Activated CD4-positive, alpha-beta T cell treated with anti-CD3 and anti-CD28 coated beads for 36 hours (primary cell): ENCODE measurements at regions of chr3 and their contacts with region 1.

Region 1: DNA sequence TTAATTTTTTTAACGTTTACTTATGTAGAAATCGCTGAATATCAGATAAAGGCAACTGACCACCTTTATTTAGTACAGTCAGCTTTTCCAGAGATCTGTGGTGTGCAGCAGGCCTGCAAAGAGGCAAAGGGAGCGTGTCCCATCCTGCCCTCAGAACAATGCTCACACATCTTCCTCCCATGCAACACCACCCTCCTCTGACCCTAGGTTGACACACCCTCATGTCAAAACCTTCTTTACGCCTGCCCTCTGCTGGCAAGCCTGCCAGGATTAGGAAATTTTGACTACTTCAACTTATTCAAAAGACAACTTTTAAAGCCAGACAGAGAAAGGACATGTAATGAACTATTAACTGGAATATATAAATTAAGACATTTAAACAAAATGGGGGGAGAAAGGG is 513.7 kb downstream of the FOXP1 start:
- DNase-seq: peak; percentile 84
- ATAC-seq: peak; percentile 42
- H3K4me3 Mint-ChIP-seq: no peak overlapping the region
- H3K27ac Mint-ChIP-seq: peak overlapping the region; percentile 67
- H3K4me1 Mint-ChIP-seq: peaks cover 85% of the 10 kb centered on the region
- H3K27me3 Mint-ChIP-seq: no peaks in the 10 kb centered on the region

Region 2: DNA sequence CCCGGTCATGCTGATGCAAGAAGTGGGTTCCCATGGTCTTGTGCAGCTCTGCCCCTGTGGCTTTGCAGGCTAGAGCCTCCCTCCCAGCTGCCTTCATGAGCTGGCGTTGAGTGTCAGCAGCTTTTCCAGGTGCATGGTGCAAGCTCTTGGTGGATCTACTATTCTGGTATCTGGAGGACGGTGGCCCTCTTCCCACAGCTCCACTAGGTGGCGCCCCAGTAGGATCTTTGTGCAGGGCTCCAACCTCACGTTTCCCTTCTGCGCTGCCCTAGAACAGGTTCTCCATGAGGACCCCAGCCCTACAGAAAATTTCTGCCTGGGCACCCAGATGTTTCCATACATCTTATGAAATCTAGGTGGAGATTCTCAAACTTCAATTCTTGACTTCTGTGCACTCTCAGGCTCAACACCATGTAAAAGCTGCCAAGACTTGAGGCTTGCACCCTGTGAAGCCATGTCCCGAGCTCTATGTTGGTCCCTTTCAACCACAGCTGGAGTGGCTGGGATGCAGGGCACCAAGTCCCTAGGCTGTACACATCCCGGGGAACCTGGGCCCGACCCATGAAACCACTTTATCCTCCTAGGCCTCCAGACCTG is 519.0 kb before region 1 on chr3:
- CTCF ChIA-PET with region 1: interaction called, 3 read pairs
- POLR2A ChIA-PET with region 1: no interaction called
- intact Hi-C with region 1: loop called (anchors 2 to 5 kb)
- DNase-seq: peak; percentile 88
- ATAC-seq: peak; percentile 91
- H3K4me3 Mint-ChIP-seq: no peak overlapping the region
- H3K27ac Mint-ChIP-seq: no peak overlapping the region
- H3K4me1 Mint-ChIP-seq: peaks cover 4% of the 10 kb centered on the region
- H3K27me3 Mint-ChIP-seq: peaks cover 2% of the 10 kb centered on the region

Region 3: GRCh38 chr3:70716832-70717231 is 353.0 kb before region 1 on chr3:
- CTCF ChIA-PET with region 1: no interaction called
- POLR2A ChIA-PET with region 1: interaction called, 3 read pairs
- intact Hi-C with region 1: loop called in 1 of 2 experiments (anchors 5 kb)
- DNase-seq: peak; percentile 10
- ATAC-seq: no peak
- H3K4me3 Mint-ChIP-seq: no peak overlapping the region
- H3K27ac Mint-ChIP-seq: no peak overlapping the region
- H3K4me1 Mint-ChIP-seq: no peaks in the 10 kb centered on the region
- H3K27me3 Mint-ChIP-seq: peaks cover 3% of the 10 kb centered on the region

Region 4: DNA sequence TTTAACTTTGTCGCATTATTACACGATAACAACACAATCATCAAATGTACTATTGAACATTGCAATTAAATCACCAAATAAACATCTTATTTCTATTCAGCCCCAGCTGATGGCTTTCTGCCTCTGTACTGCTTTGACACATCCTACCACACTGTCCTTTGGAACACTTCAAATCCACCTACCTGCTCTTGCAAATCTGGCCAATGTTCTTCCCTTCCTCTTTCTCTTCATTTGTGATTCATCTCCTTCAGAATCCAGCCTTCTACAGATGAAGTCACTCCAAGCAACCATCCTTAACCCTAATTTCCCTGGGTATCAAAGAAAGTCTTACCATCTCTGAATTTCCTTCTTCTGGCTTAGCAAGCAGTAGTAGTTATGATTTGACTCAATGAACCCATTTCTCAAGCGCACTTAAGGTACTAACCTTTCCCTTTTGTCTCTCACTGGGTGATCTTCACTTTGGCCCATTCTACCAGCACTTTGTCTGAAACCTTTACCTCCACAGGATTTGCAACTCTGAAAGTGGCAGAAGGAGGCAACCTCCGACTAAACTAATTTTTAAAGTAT is 10.8 kb after region 1 on chr3:
- CTCF ChIA-PET with region 1: interaction called, 6 read pairs
- POLR2A ChIA-PET with region 1: interaction called, 5 read pairs
- intact Hi-C with region 1: loop called (anchors 1 kb)
- DNase-seq: no peak
- ATAC-seq: peak; percentile 55
- H3K4me3 Mint-ChIP-seq: peak overlapping the region; percentile 50
- H3K27ac Mint-ChIP-seq: peak overlapping the region; percentile 87
- H3K4me1 Mint-ChIP-seq: peaks cover 94% of the 10 kb centered on the region
- H3K27me3 Mint-ChIP-seq: no peaks in the 10 kb centered on the region

Region 5: GRCh38 chr3:71210257-71211007 is 140.6 kb after region 1 on chr3:
- CTCF ChIA-PET with region 1: no interaction called
- POLR2A ChIA-PET with region 1: no interaction called
- intact Hi-C with region 1: no loop called
- DNase-seq: no peak
- ATAC-seq: peak; percentile 20
- H3K4me3 Mint-ChIP-seq: peak overlapping the region; percentile 26
- H3K27ac Mint-ChIP-seq: peak overlapping the region; percentile 73
- H3K4me1 Mint-ChIP-seq: peaks cover 83% of the 10 kb centered on the region
- H3K27me3 Mint-ChIP-seq: no peaks in the 10 kb centered on the region